IMR-90 (cell line): ENCODE measurements at regions of chr11 and their contacts with region 1.

Region 1: GRCh38 chr11:44043157-44043556 is 4.6 kb upstream of the ACCSL start:
- DNase-seq: no peak
- ATAC-seq: no peak
- H3K4me3 ChIP-seq: no peak overlapping the region
- H3K27ac ChIP-seq: no peak overlapping the region
- H3K4me1 ChIP-seq: no peaks in the 10 kb centered on the region
- H3K27me3 ChIP-seq: peaks cover 10% of the 10 kb centered on the region
- CTCF ChIP-seq: no peak
- POLR2A ChIP-seq: no peak
- RAD21 ChIP-seq: no peak

Region 2: GRCh38 chr11:43880640-43881159 is 162.5 kb before region 1 on chr11 and contains the start of gene ALKBH3:
- CTCF ChIA-PET with region 1: no interaction called
- POLR2A ChIA-PET with region 1: no interaction called
- dilution Hi-C with region 1: no loop called
- in situ Hi-C with region 1: loop called (anchors 5 kb)
- intact Hi-C with region 1: no loop called
- DNase-seq: peak; percentile 95
- ATAC-seq: peak; percentile 100
- H3K4me3 ChIP-seq: peak within 1 kb of the TSS; percentile 84
- H3K27ac ChIP-seq: peak within 1 kb of the TSS; percentile 47
- H3K4me1 ChIP-seq: 0 out of 2 replicates have a peak, but pooled peaks cover 2% of the 10 kb centered on the region
- H3K27me3 ChIP-seq: no peaks in the 10 kb centered on the region
- CTCF ChIP-seq: 0 out of 2 replicates have a peak, but pooled peaks have one; percentile 9
- POLR2A ChIP-seq: no peak
- RAD21 ChIP-seq: no peak
- total RNA-seq, gene ALKBH3: 62.9 and 68.6 TPM in 2 replicates

Region 3: GRCh38 chr11:43937434-43938411 is 105.4 kb before region 1 on chr11:
- CTCF ChIA-PET with region 1: no interaction called
- POLR2A ChIA-PET with region 1: no interaction called
- dilution Hi-C with region 1: no loop called
- in situ Hi-C with region 1: no loop called
- intact Hi-C with region 1: no loop called
- DNase-seq: peak; percentile 70
- ATAC-seq: peak; percentile 68
- H3K4me3 ChIP-seq: no peak overlapping the region
- H3K27ac ChIP-seq: peak overlapping the region; percentile 9; the same call in 1 of the 2 replicates
- H3K4me1 ChIP-seq: peaks cover 19% of the 10 kb centered on the region
- H3K27me3 ChIP-seq: peaks cover 21% of the 10 kb centered on the region
- CTCF ChIP-seq: no peak
- POLR2A ChIP-seq: no peak
- RAD21 ChIP-seq: no peak